ENCODE measurements at regions of chr3 and their contacts with region 1.

Region 1: GRCh38 chr3:42839616-42840015 is 30.4 kb downstream of the ACKR2 start:
- DNase-seq: peak in 3 of 5 donors; percentile 23 to 50 (median 31)
- H3K4me3 ChIP-seq: no peak overlapping the region
- H3K27ac ChIP-seq: no peak overlapping the region
- H3K4me1 ChIP-seq: no peaks in the 10 kb centered on the region
- H3K27me3 ChIP-seq: no peaks in the 10 kb centered on the region
- CTCF ChIP-seq: peak; percentile 37 to 82 (median 81)
- EP300 ChIP-seq: no peak
- POLR2A ChIP-seq: no peak

Region 2: DNA sequence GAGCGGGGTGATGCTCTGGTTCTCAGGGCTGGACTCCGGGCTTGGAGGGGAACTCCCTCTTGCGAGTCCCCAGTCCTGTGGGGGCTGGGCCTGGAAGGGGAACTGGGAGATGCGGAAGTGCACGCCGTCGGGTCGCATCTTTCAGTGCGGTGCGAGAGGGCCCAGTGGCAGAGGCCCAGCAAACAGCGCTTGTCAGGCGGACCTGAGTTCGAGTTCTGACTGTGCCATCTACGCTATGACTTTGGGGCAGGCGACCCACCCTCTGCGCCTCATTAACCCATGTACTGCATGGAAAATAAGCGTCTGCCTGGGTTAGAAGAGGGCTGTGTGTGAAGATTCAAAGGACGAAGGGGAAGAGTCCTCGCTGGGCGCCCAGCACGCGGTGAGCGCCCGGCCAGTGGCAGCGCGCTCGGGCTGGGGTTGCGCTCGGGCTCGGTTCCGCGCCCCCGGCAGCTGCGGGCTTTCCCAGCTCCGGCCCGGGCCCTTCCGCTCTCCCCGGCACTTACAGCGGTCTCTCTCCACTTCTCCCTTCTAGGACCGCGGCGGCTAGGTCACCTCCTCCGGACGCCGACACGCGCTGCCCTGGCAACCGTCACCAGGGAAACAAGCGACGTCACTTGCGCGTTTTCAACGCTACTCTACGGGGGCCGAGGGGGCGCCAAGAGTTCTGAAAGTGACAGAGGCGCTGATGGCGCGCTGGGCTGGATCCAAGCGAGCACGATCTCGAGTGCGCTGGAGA is 66.8 kb before region 1 on chr3 and contains the start of gene CCDC13:
- intact Hi-C with region 1: loop called in 1 of 4 experiments (anchors 2 kb)
- DNase-seq: peak; percentile 89 to 96 (median 93)
- H3K4me3 ChIP-seq: peak within 1 kb of the TSS; percentile 49
- H3K27ac ChIP-seq: no peak within 1 kb of the TSS
- H3K4me1 ChIP-seq: no peaks in the 10 kb centered on the region
- H3K27me3 ChIP-seq: no peaks in the 10 kb centered on the region
- CTCF ChIP-seq: no peak
- EP300 ChIP-seq: no peak
- POLR2A ChIP-seq: no peak
- total RNA-seq, gene CCDC13: 0.24 to 5.7 (median 0.60) TPM

Region 3: GRCh38 chr3:42780892-42781700 is 58.5 kb before region 1 on chr3:
- intact Hi-C with region 1: loop called (anchors 2 to 10 kb)
- DNase-seq: no peak
- H3K4me3 ChIP-seq: no peak overlapping the region
- H3K27ac ChIP-seq: no peak overlapping the region
- H3K4me1 ChIP-seq: no peaks in the 10 kb centered on the region
- H3K27me3 ChIP-seq: no peaks in the 10 kb centered on the region
- CTCF ChIP-seq: peak; percentile 58 to 78 (median 71)
- EP300 ChIP-seq: no peak
- POLR2A ChIP-seq: no peak

Region 4: GRCh38 chr3:43105596-43106292 is 266.1 kb after region 1 on chr3 and contains the start of gene POMGNT2:
- intact Hi-C with region 1: no loop called
- DNase-seq: peak; percentile 88 to 93 (median 91)
- H3K4me3 ChIP-seq: peak within 1 kb of the TSS; percentile 92
- H3K27ac ChIP-seq: peak within 1 kb of the TSS; percentile 69 to 79
- H3K4me1 ChIP-seq: peaks cover 8% of the 10 kb centered on the region
- H3K27me3 ChIP-seq: no peaks in the 10 kb centered on the region
- CTCF ChIP-seq: peak in 1 of 3 donors; percentile 23
- EP300 ChIP-seq: no peak
- POLR2A ChIP-seq: peak; percentile 81
- total RNA-seq, gene POMGNT2: 26.7 to 51.7 (median 43.7) TPM

Region 5: GRCh38 chr3:43540624-43541023 is 701.0 kb after region 1 on chr3:
- intact Hi-C with region 1: no loop called
- DNase-seq: no peak
- H3K4me3 ChIP-seq: no peak overlapping the region
- H3K27ac ChIP-seq: no peak overlapping the region
- H3K4me1 ChIP-seq: no peaks in the 10 kb centered on the region
- H3K27me3 ChIP-seq: no peaks in the 10 kb centered on the region
- CTCF ChIP-seq: no peak
- EP300 ChIP-seq: no peak
- POLR2A ChIP-seq: no peak

Measured in ovary (tissue), 10 donors.